Activated CD4-positive, alpha-beta T cell treated with anti-CD3 and anti-CD28 coated beads, Interleukin-2, amount 10 ng/mL, durations not matched to agents 24 days and 14 days (primary cell): ENCODE measurements at regions of chr20 and their contacts with region 1.

Region 1: GRCh38 chr20:37384683-37385174 is 38.8 kb downstream of the SRC start:
- DNase-seq: peak; percentile 96
- H3K4me3 Mint-ChIP-seq: peak overlapping the region; percentile 72
- H3K27ac Mint-ChIP-seq: peak overlapping the region; percentile 85
- H3K4me1 Mint-ChIP-seq: peaks cover 7% of the 10 kb centered on the region
- H3K27me3 Mint-ChIP-seq: peaks cover 7% of the 10 kb centered on the region

Region 2: DNA sequence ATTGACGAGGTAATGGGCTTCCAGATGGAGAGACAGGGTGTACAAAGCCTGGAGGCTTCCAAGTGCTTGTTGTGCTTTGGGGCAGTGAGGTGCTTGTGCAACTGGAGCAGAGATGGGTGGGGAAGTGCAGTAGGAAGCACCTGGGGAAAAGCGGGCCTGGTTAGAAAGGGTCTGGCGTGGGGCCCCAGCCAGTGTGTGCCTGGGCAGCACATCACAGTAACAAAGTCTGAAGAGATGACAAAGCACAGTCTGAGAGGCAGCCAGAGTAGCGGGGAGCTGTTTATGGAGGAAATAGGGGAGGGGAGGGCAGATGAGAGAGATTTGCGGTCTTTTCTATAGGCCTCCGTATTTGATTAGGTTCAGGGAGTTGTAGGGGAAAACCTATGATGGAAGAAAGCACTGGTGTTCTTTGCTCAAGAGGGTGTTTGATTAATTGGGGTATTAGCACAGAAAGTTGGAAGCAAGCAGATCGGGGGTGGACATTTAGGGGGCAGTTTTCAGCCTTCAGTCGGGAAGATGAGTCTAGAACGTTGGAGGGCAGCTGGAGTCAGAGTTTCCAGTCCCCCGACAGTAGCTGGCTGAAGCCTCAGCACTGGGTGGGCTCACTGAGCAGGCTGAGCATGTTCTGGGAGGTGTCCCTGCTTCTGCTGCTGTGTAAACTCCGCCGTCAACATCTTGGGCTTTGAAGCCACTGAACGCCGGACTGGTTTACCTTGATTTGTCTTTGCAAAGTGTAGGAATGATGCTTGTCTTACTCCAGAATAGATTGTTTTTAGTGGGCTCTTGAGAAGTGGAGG is 189.9 kb before region 1 on chr20:
- intact Hi-C with region 1: loop called (anchors 5 kb)
- DNase-seq: peak; percentile 75
- H3K4me3 Mint-ChIP-seq: peak overlapping the region; percentile 40
- H3K27ac Mint-ChIP-seq: peak overlapping the region; percentile 61
- H3K4me1 Mint-ChIP-seq: peaks cover 50% of the 10 kb centered on the region
- H3K27me3 Mint-ChIP-seq: no peaks in the 10 kb centered on the region

Region 3: GRCh38 chr20:37270576-37271420 is 113.9 kb before region 1 on chr20:
- intact Hi-C with region 1: loop called (anchors 1 kb)
- DNase-seq: no peak
- H3K4me3 Mint-ChIP-seq: no peak overlapping the region
- H3K27ac Mint-ChIP-seq: no peak overlapping the region
- H3K4me1 Mint-ChIP-seq: peaks cover 4% of the 10 kb centered on the region
- H3K27me3 Mint-ChIP-seq: peaks cover 11% of the 10 kb centered on the region

Region 4: GRCh38 chr20:37356387-37356786 is 28.3 kb before region 1 on chr20:
- intact Hi-C with region 1: no loop called
- DNase-seq: no peak
- H3K4me3 Mint-ChIP-seq: no peak overlapping the region
- H3K27ac Mint-ChIP-seq: no peak overlapping the region
- H3K4me1 Mint-ChIP-seq: peaks cover 1% of the 10 kb centered on the region
- H3K27me3 Mint-ChIP-seq: no peaks in the 10 kb centered on the region

Region 5: DNA sequence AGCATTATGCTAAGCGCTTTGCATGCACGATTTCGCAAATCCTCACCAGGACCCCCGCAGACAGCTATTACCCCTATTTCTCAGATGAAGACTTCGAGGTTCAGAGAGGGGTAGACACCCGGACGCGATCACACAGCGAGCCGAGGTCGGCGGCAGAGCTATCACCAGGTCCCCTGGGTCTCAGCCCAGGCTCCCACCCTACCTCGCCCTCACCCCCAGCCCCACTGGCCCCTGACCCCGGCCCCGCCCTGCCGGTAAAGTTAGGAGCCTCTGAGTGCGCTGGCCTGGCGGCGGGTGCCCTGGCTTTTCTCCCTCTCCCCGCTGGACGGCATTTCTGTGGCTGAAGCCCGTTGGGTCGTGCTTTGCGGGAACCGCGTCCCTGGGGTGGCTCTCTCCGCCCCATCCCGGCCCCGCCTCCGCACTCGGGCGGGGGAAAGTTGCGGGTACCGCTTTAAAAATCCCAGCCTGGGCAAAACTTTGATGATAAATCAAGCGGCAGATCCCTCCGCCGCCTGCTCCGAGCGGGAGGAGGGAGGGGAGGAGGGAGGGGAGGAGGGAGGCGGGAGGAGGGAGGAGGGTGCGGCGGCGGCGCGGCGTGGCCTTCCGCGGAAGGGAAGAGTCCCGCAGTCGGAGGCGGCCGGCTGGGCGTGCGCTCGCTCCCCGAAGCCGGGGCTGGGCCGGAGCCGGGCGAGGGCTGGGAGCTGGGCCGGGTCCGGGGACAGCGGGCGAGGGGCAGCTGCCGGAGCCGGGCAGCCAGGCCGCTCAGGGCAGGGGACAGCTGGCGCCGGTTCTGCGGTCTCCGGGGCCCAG is 518.0 kb after region 1 on chr20 and contains the start of gene VSTM2L:
- intact Hi-C with region 1: no loop called
- DNase-seq: peak; percentile 57
- H3K4me3 Mint-ChIP-seq: peak within 1 kb of the TSS; percentile 28
- H3K27ac Mint-ChIP-seq: peak within 1 kb of the TSS; percentile 54
- H3K4me1 Mint-ChIP-seq: peaks cover 10% of the 10 kb centered on the region
- H3K27me3 Mint-ChIP-seq: peaks cover 50% of the 10 kb centered on the region
- total RNA-seq, gene VSTM2L: 0.09 TPM in 1 of 2 replicates, not detected in the other